HepG2 (cell line): ENCODE measurements at regions of chr6 and their contacts with region 1.

Region 1: DNA sequence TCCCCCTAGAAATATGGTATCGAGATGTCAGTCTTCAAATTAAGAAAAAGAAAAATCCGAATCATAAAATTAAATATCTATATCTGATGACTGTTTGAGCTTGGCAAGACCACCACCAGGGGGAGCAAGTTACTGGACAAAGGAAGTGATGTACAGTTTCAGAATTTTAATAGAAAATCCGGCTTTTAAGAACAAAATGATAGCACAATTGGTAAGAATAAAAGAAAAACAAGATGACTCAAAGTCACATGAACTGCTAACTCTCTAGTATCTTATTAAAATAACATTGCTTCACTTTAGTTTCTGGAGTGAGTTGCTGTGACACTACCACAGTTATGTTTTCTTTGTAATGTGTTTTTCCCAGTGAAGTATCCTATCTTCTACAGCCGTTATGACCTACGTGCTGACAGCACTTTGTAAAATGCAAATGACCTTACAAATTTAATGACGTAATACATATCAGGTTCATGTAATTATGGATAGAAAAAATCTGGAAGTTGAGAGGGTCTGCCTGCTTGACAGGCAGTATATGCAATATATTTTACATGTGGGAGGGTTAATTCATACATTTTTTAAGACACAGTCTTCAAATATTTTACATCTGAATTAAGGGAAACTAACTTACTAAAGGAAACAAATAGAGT is 405.3 kb upstream of the HS3ST5 start:
- DNase-seq: peak; percentile 21
- ATAC-seq: no peak
- H3K4me3 ChIP-seq: no peak overlapping the region
- H3K27ac ChIP-seq: no peak overlapping the region
- H3K4me1 ChIP-seq: no peaks in the 10 kb centered on the region
- H3K27me3 ChIP-seq: no peaks in the 10 kb centered on the region; a peak in 1 of 5 replicates
- CTCF ChIP-seq: peak; percentile 47
- EP300 ChIP-seq: no peak
- POLR2A ChIP-seq: no peak
- RAD21 ChIP-seq: no peak

Region 2: DNA sequence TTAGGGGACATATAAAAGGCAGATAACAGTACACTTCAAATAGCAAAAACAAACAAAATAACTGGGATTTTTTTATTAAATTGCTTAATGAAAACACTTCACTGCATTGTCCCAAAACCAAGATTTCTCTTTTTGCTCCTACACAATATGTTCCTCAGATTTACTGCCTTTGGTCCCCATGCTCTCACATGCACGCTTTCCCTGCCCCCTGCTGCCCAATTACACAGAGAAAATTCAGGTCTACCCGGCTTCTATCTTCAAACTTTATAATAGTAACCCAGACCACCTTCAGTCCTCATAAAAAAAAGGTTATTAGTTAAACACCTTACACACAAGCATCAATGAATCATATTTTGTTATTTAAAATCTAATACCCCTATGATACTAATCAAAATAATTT is 268.5 kb after region 1 on chr6:
- CTCF ChIA-PET with region 1: no interaction called
- POLR2A ChIA-PET with region 1: no interaction called
- in situ Hi-C with region 1: no loop called
- intact Hi-C with region 1: loop called (anchors 2 kb)
- DNase-seq: no peak
- ATAC-seq: no peak
- H3K4me3 ChIP-seq: no peak overlapping the region
- H3K27ac ChIP-seq: no peak overlapping the region
- H3K4me1 ChIP-seq: no peaks in the 10 kb centered on the region
- H3K27me3 ChIP-seq: no peaks in the 10 kb centered on the region
- CTCF ChIP-seq: no peak
- EP300 ChIP-seq: no peak
- POLR2A ChIP-seq: no peak
- RAD21 ChIP-seq: no peak

Region 3: GRCh38 chr6:115271434-115271833 is 523.3 kb after region 1 on chr6:
- CTCF ChIA-PET with region 1: no interaction called
- POLR2A ChIA-PET with region 1: no interaction called
- in situ Hi-C with region 1: no loop called
- intact Hi-C with region 1: loop called (anchors 5 kb)
- DNase-seq: no peak
- ATAC-seq: no peak
- H3K4me3 ChIP-seq: no peak overlapping the region
- H3K27ac ChIP-seq: no peak overlapping the region
- H3K4me1 ChIP-seq: no peaks in the 10 kb centered on the region
- H3K27me3 ChIP-seq: no peaks in the 10 kb centered on the region
- CTCF ChIP-seq: no peak
- EP300 ChIP-seq: no peak
- POLR2A ChIP-seq: no peak
- RAD21 ChIP-seq: no peak

Region 4: GRCh38 chr6:115896538-115897129 is 1148.5 kb after region 1 on chr6:
- CTCF ChIA-PET with region 1: interaction called, 10 read pairs
- POLR2A ChIA-PET with region 1: no interaction called
- in situ Hi-C with region 1: loop called (anchors 25 kb)
- intact Hi-C with region 1: loop called (anchors 1 kb)
- DNase-seq: peak; percentile 14
- ATAC-seq: peak; percentile 73
- H3K4me3 ChIP-seq: no peak overlapping the region
- H3K27ac ChIP-seq: no peak overlapping the region
- H3K4me1 ChIP-seq: peaks cover 8% of the 10 kb centered on the region
- H3K27me3 ChIP-seq: no peaks in the 10 kb centered on the region; a peak in 1 of 5 replicates
- CTCF ChIP-seq: peak; percentile 68
- EP300 ChIP-seq: no peak
- POLR2A ChIP-seq: no peak
- RAD21 ChIP-seq: peak; percentile 29; the same call in 1 of the 2 replicates